Psoas muscle (tissue), 8 donors: ENCODE measurements at regions of chr11 and their contacts with region 1.

Region 1: GRCh38 chr11:6389921-6390724 is at the start of gene SMPD1:
- DNase-seq: peak; percentile 94 to 97
- ATAC-seq: peak; percentile 97
- H3K4me3 ChIP-seq: peak within 1 kb of the TSS; percentile 89
- H3K27ac ChIP-seq: peak within 1 kb of the TSS; percentile 95
- H3K4me1 ChIP-seq: peaks cover 17% of the 10 kb centered on the region
- H3K27me3 ChIP-seq: no peaks in the 10 kb centered on the region
- CTCF ChIP-seq: no peak
- total RNA-seq, gene SMPD1: 37.6 to 57.4 (median 39.1) TPM

Region 2: GRCh38 chr11:6419009-6419631 is 29.0 kb after region 1 on chr11 and contains the start of gene APBB1:
- intact Hi-C with region 1: loop called in 1 of 2 experiments (anchors 2 kb)
- DNase-seq: peak; percentile 77 to 84
- ATAC-seq: peak; percentile 94 to 98 (median 96)
- H3K4me3 ChIP-seq: peak within 1 kb of the TSS; percentile 90
- H3K27ac ChIP-seq: peak within 1 kb of the TSS; percentile 89
- H3K4me1 ChIP-seq: peaks cover 9% of the 10 kb centered on the region
- H3K27me3 ChIP-seq: peaks cover 0 to 1% (median 0%) of the 10 kb centered on the region in 3 donors
- CTCF ChIP-seq: peak; percentile 18
- total RNA-seq, gene APBB1: 36.5 to 53.9 (median 43.0) TPM

Region 3: GRCh38 chr11:6481012-6481923 is 91.1 kb after region 1 on chr11 and contains the starts of genes ARFIP2 and TIMM10B:
- intact Hi-C with region 1: loop called in 1 of 2 experiments (anchors 5 kb)
- DNase-seq: peak; percentile 98 to 99
- ATAC-seq: peak; percentile 98 to 99 (median 99)
- H3K4me3 ChIP-seq: peak within 1 kb of the TSS; percentile 93
- H3K27ac ChIP-seq: peak within 1 kb of the TSS; percentile 95
- H3K4me1 ChIP-seq: peaks cover 21% of the 10 kb centered on the region
- H3K27me3 ChIP-seq: no peaks in the 10 kb centered on the region
- CTCF ChIP-seq: no peak
- total RNA-seq, gene ARFIP2: 8.4 to 25.5 (median 15.5) TPM
- total RNA-seq, gene TIMM10B: 12.5 to 25.2 (median 16.1) TPM

Region 4: DNA sequence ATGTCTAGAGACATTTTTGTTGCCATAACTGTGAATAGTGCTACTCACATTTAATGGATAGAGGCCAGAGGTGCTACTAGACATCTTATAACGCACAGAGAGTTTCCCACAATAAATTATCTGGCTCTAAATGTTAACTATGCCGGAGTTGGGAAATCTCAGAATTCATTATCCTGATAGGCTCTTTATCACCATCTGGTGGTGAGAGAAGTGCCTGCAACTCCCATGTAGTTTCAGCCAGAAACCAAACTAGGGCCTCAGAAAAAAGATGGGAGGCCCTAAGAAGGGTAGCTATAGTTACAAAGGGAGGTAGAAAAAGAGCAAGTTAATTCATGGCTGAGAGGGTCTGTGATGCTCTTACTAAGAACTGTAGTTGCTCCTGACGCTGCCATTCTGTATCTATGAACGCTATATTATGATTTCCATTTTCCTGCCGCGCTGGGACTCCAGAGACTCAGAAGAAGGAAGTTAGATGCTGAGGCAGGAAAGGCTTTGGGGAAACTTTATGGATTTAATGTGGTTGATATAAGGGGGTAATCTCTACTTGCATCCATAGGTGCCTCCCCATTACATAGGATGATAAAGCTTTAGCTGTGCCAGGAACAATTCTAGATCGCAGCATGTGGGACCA is 315.9 kb after region 1 on chr11:
- intact Hi-C with region 1: loop called (anchors 10 kb)
- DNase-seq: no peak
- ATAC-seq: peak; percentile 46 to 83 (median 70)
- H3K4me3 ChIP-seq: no peak overlapping the region
- H3K27ac ChIP-seq: no peak overlapping the region
- H3K4me1 ChIP-seq: peaks cover 4% of the 10 kb centered on the region
- H3K27me3 ChIP-seq: no peaks in the 10 kb centered on the region
- CTCF ChIP-seq: peak; percentile 91